HEK293T (cell line): ENCODE measurements at regions of chr6 and their contacts with region 1.

Region 1: GRCh38 chr6:1609648-1610496 is at the start of gene FOXC1:
- DNase-seq: peak; percentile 77

Region 2: DNA sequence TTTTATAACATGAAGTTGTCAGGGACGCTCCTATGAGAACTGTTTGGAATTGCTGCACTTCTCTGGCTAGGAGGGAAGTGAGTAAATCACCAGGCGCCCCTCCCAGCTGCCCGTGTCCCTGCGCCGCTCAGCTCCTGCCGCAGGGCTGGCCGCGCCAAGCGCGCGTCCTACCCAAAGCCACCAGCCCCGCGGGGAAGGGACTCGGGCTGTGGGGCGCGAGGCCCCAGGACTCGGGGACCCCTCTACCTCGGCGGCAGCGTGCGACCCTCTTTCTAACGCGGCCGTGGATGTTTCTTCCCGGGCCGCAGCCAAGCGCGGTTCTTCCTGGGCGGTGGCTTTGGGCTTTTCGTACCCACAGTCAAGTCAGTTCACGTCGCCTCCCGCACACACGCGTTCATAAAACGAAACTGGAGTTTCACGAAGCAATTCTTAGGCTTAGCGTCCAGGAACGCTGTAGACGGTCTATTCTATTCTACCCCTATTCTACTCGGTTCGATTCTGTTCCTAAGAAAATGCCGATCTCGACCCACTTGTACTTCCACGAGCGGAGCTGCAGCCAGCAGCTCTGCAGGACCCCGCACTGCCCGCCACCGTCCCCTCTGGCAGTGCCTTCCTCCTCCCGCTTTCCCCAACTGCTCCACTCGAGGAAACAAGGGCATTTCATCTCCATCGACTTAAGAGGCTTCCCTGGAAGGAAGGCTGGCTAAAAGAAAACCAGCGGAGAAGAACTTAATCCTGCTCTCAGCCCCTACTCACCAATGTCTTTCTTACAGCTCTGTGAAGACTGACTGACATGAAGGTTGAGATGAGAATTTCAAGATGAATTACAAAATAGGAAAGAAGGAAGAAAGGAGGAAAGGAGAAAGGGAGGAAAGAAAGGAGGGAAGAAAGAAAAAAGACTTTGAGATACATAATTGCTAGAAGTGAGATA is 15.2 kb after region 1 on chr6:
- CTCF ChIA-PET with region 1: interaction called, 4 read pairs
- POLR2A ChIA-PET with region 1: interaction called, 144 read pairs
- DNase-seq: no peak

Region 3: DNA sequence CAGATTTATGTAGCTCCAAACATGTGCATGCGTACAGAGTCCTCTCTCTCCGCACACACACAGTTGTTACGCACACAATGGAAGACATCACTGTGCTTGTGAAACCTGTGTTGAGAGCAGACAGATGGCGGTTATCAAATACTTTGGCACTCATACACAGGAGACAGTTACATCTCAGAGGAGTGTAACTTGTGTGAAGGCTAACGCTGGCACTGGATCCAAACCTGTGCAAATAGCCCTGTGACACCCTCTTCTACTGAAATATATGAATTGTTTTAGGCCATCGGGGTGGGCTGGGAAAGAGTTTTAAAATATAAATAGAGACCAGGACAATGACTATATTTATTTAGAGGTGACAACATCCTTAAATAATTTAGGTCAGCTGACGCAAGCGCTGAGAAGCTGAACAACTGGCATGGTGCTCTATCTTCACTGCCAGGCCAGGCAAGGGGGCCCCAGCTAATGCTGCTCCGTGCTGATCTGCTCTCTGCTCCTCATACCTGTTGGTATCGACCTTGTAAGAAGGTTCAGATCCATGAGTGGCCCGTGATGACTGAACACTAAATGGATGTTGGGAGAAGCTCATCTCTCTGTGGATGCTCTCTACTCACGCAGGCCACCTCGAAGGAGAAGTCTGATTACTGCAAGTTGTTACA is 69.3 kb after region 1 on chr6:
- CTCF ChIA-PET with region 1: interaction called, 3 read pairs
- POLR2A ChIA-PET with region 1: interaction called, 15 read pairs
- DNase-seq: no peak

Region 4: DNA sequence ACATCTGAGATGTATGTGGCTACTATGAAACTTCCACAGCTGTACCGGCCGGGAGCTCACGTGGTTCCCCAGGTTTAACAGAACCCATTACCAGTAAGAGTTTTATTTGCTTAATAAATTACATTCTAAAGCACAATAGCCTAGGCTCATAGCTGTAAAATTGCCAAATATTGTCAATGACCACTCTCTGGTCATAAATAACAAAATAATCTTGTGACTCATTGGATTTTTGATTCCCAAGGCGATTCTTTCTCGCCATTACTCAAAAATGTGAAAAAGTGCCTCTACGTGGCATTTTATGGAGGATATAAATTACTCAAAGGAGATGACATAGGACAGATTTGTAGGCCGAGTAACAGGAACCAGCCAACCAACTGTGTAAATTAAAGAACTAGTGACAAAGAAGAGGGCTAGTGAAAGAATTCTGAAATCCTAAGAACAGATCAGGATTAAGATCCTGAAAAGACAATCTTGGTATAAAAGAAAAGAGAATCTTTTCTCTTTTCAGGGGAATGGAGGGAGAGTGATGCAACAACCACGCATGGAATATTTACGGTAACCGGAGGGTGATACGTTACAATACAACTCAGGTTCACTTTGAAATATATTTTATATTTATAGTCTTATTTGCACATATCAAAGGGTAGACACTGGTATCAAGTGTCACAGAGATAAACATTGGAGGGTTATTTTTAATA is 199.6 kb after region 1 on chr6:
- CTCF ChIA-PET with region 1: interaction called, 4 read pairs
- POLR2A ChIA-PET with region 1: interaction called, 30 read pairs
- DNase-seq: peak; percentile 39

Region 5: DNA sequence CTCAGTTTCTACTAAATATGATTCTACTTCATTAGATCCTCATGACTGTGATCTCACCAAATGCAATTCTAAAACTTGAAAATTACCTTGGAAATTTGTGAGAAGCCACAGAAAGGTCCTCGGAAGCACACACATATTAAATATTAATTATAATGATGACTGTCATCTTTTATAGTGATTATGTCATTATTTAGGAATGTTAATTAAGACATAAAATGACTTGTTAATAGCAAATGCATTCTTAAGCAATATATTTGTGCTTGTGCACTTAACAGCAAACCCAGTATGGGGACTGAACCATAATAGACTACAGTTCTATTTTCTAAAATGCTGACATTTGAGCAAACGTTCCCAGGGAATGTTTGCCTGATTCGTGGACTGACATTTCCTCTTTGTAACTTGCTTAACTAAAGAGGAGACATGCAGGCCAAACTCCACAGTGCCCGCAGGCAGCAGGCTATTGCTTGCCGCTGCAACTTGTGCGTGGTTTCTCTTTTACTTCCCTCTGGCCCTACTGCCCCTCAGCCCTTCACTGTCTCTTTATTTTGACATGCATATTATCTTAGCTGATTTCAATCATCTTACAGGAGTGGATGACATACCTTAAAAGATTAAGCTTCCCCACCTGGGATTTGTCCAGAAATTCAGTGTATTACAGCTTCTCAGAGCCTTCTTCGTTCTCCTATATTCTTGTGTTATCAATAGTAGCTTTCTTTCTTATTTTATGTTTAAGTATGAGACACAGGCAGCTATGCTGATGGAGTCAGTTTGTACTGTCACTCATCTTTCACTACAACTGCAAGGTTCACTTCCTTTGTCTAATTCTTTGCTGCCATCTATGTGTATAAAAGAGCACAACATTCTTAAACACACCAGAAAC is 494.0 kb after region 1 on chr6:
- CTCF ChIA-PET with region 1: interaction called, 7 read pairs
- POLR2A ChIA-PET with region 1: interaction called, 20 read pairs
- DNase-seq: peak; percentile 47